CD8-positive, alpha-beta memory T cell (primary cell): ENCODE measurements at regions of chr12 and their contacts with region 1.

Region 1: GRCh38 chr12:69359531-69360347 is at the start of gene YEATS4:
- DNase-seq: peak; percentile 71 to 89 (median 84)
- H3K4me3 ChIP-seq: peak within 1 kb of the TSS; percentile 98
- H3K4me3 Mint-ChIP-seq: peak within 1 kb of the TSS; percentile 81 to 94 (median 90)
- H3K27ac ChIP-seq: peak within 1 kb of the TSS; percentile 91
- H3K27ac Mint-ChIP-seq: peak within 1 kb of the TSS; percentile 82 to 99 (median 92)
- H3K4me1 ChIP-seq: peaks cover 17% of the 10 kb centered on the region
- H3K4me1 Mint-ChIP-seq: peaks cover 21 to 34% (median 31%) of the 10 kb centered on the region in 3 donors
- H3K27me3 ChIP-seq: no peaks in the 10 kb centered on the region
- H3K27me3 Mint-ChIP-seq: peaks cover 1 to 3% of the 10 kb centered on the region in 2 donors
- total RNA-seq, gene YEATS4: 34.9 to 39.7 TPM

Region 2: DNA sequence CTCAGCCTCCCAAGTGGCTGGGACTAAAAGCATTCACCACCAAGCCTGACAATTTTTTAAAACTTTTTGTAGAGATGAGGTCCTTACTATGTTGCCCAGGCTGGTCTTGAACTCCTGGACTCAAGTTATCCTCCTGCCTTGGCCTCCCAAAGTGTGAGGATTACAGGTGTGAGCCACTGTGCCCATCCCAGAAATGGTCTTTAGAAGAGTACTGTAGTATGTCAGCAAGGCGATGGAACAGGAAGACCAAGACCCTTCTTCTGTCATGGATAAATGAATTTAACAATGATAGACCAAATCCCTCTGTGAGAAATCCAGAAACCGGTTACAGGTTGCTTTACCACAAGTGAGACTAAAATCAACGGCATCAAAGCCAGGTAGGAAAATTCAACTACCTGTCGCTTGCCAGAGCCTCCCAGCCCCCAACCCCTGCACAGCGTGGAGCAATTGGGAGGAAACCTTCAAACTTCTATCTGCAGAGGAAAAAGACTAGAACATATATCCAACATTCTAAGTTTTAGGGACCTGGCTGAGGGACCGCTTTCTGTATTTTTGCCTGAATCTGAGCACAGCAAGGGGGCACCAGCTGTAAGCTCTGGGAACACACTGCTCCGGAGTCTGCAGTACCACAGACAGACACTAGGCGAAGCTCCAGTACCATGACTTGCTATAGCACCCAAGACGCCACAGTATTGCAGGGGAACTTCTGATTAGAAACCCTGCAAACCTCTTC is 69.0 kb before region 1 on chr12:
- CTCF ChIA-PET with region 1: interaction called, 15 read pairs
- POLR2A ChIA-PET with region 1: no interaction called
- DNase-seq: peak; percentile 58 to 84 (median 65)
- H3K4me3 ChIP-seq: no peak overlapping the region
- H3K4me3 Mint-ChIP-seq: no peak overlapping the region
- H3K27ac ChIP-seq: no peak overlapping the region
- H3K27ac Mint-ChIP-seq: peak overlapping the region in 1 of 8 donors; percentile 43
- H3K4me1 ChIP-seq: peaks cover 4% of the 10 kb centered on the region
- H3K4me1 Mint-ChIP-seq: peaks cover 4 to 6% (median 5%) of the 10 kb centered on the region in 3 donors
- H3K27me3 ChIP-seq: peaks cover 10% of the 10 kb centered on the region
- H3K27me3 Mint-ChIP-seq: peaks cover 18 to 44% of the 10 kb centered on the region in 2 donors

Region 3: GRCh38 chr12:69330475-69331473 is 29.0 kb before region 1 on chr12:
- CTCF ChIA-PET with region 1: interaction called, 28 read pairs
- POLR2A ChIA-PET with region 1: interaction called, 13 read pairs
- DNase-seq: peak; percentile 19 to 77 (median 66)
- H3K4me3 ChIP-seq: peak overlapping the region; percentile 73
- H3K4me3 Mint-ChIP-seq: peak overlapping the region; percentile 89 to 96 (median 94)
- H3K27ac ChIP-seq: peak overlapping the region; percentile 79
- H3K27ac Mint-ChIP-seq: peak overlapping the region; percentile 89 to 99 (median 96)
- H3K4me1 ChIP-seq: peaks cover 47% of the 10 kb centered on the region
- H3K4me1 Mint-ChIP-seq: peaks cover 27 to 59% (median 53%) of the 10 kb centered on the region in 3 donors
- H3K27me3 ChIP-seq: no peaks in the 10 kb centered on the region
- H3K27me3 Mint-ChIP-seq: no peaks in the 10 kb centered on the region

Region 4: GRCh38 chr12:69337311-69338090 is 22.2 kb before region 1 on chr12:
- CTCF ChIA-PET with region 1: interaction called, 28 read pairs
- POLR2A ChIA-PET with region 1: interaction called, 13 read pairs
- DNase-seq: no peak
- H3K4me3 ChIP-seq: no peak overlapping the region
- H3K4me3 Mint-ChIP-seq: no peak overlapping the region
- H3K27ac ChIP-seq: no peak overlapping the region
- H3K27ac Mint-ChIP-seq: no peak overlapping the region
- H3K4me1 ChIP-seq: peaks cover 23% of the 10 kb centered on the region
- H3K4me1 Mint-ChIP-seq: peaks cover 9 to 26% (median 19%) of the 10 kb centered on the region in 3 donors
- H3K27me3 ChIP-seq: no peaks in the 10 kb centered on the region
- H3K27me3 Mint-ChIP-seq: peaks cover 1 to 5% of the 10 kb centered on the region in 2 donors

Region 5: GRCh38 chr12:69425412-69425811 is 65.7 kb after region 1 on chr12:
- CTCF ChIA-PET with region 1: no interaction called
- POLR2A ChIA-PET with region 1: no interaction called
- DNase-seq: no peak
- H3K4me3 ChIP-seq: no peak overlapping the region
- H3K4me3 Mint-ChIP-seq: no peak overlapping the region
- H3K27ac ChIP-seq: no peak overlapping the region
- H3K27ac Mint-ChIP-seq: no peak overlapping the region
- H3K4me1 ChIP-seq: no peaks in the 10 kb centered on the region
- H3K4me1 Mint-ChIP-seq: no peaks in the 10 kb centered on the region
- H3K27me3 ChIP-seq: no peaks in the 10 kb centered on the region
- H3K27me3 Mint-ChIP-seq: no peaks in the 10 kb centered on the region

Region 6: GRCh38 chr12:69570545-69571399 is 211.0 kb after region 1 on chr12:
- CTCF ChIA-PET with region 1: interaction called, 35 read pairs
- POLR2A ChIA-PET with region 1: interaction called, 6 read pairs
- DNase-seq: peak; percentile 20 to 57 (median 54)
- H3K4me3 ChIP-seq: no peak overlapping the region
- H3K4me3 Mint-ChIP-seq: no peak overlapping the region
- H3K27ac ChIP-seq: no peak overlapping the region
- H3K27ac Mint-ChIP-seq: peak overlapping the region in 5 of 8 donors; percentile 6 to 64 (median 26)
- H3K4me1 ChIP-seq: no peaks in the 10 kb centered on the region
- H3K4me1 Mint-ChIP-seq: no peaks in the 10 kb centered on the region
- H3K27me3 ChIP-seq: no peaks in the 10 kb centered on the region
- H3K27me3 Mint-ChIP-seq: no peaks in the 10 kb centered on the region

Region 7: GRCh38 chr12:69639400-69640016 is 279.8 kb after region 1 on chr12:
- CTCF ChIA-PET with region 1: interaction called, 22 read pairs
- POLR2A ChIA-PET with region 1: no interaction called
- DNase-seq: peak; percentile 30 to 68 (median 38)
- H3K4me3 ChIP-seq: no peak overlapping the region
- H3K4me3 Mint-ChIP-seq: no peak overlapping the region
- H3K27ac ChIP-seq: no peak overlapping the region
- H3K27ac Mint-ChIP-seq: no peak overlapping the region
- H3K4me1 ChIP-seq: no peaks in the 10 kb centered on the region
- H3K4me1 Mint-ChIP-seq: no peaks in the 10 kb centered on the region
- H3K27me3 ChIP-seq: no peaks in the 10 kb centered on the region
- H3K27me3 Mint-ChIP-seq: no peaks in the 10 kb centered on the region